ENCODE measurements at regions of chr17 and their contacts with region 1.

Region 1: GRCh38 chr17:48259694-48260291 is 152.2 kb downstream of the SNX11 start:
- DNase-seq: no peak
- ATAC-seq: no peak
- H3K4me3 ChIP-seq: no peak overlapping the region
- H3K27ac ChIP-seq: no peak overlapping the region
- H3K4me1 ChIP-seq: no peaks in the 10 kb centered on the region
- H3K27me3 ChIP-seq: no peaks in the 10 kb centered on the region
- CTCF ChIP-seq: peak; percentile 60

Region 2: GRCh38 chr17:48174833-48175523 is 84.8 kb before region 1 on chr17:
- intact Hi-C with region 1: no loop called
- DNase-seq: no peak
- ATAC-seq: no peak
- H3K4me3 ChIP-seq: no peak overlapping the region
- H3K27ac ChIP-seq: no peak overlapping the region
- H3K4me1 ChIP-seq: no peaks in the 10 kb centered on the region
- H3K27me3 ChIP-seq: peaks cover 0 to 4% (median 3%) of the 10 kb centered on the region in 3 donors
- CTCF ChIP-seq: no peak

Region 3: DNA sequence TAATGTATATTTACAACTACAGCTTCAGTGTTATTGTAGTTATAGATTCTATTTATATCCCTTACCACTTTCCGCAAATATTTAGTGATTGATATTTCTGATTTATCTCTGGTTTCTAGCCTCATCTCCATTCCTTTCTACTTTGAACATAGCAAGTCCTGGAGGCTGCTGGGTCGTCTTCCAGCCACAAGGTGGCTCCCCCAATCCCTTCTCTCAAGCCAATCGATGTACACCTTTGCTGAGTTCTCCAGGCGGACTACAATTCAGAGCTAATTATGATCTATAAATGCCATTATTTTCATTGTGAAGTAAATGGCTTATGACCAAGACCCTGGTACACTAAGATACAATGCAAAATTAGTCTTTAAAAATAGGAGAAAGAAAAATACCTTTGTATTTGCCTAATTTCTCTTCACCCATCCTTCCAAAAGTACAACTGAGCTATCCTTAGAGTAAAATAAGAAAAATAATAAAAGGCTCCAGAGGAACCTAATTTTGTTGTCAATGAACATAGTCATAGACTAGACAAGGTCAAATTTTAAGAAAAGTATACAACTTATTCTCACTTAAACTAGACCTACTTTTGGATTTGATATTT is 48.1 kb after region 1 on chr17:
- intact Hi-C with region 1: loop called in 1 of 2 experiments (anchors 10 kb)
- DNase-seq: peak in 1 of 2 donors; percentile 28
- ATAC-seq: peak; percentile 54 to 77 (median 58)
- H3K4me3 ChIP-seq: no peak overlapping the region
- H3K27ac ChIP-seq: no peak overlapping the region
- H3K4me1 ChIP-seq: no peaks in the 10 kb centered on the region
- H3K27me3 ChIP-seq: peaks cover 0 to 33% (median 16%) of the 10 kb centered on the region in 3 donors
- CTCF ChIP-seq: peak; percentile 78

Region 4: DNA sequence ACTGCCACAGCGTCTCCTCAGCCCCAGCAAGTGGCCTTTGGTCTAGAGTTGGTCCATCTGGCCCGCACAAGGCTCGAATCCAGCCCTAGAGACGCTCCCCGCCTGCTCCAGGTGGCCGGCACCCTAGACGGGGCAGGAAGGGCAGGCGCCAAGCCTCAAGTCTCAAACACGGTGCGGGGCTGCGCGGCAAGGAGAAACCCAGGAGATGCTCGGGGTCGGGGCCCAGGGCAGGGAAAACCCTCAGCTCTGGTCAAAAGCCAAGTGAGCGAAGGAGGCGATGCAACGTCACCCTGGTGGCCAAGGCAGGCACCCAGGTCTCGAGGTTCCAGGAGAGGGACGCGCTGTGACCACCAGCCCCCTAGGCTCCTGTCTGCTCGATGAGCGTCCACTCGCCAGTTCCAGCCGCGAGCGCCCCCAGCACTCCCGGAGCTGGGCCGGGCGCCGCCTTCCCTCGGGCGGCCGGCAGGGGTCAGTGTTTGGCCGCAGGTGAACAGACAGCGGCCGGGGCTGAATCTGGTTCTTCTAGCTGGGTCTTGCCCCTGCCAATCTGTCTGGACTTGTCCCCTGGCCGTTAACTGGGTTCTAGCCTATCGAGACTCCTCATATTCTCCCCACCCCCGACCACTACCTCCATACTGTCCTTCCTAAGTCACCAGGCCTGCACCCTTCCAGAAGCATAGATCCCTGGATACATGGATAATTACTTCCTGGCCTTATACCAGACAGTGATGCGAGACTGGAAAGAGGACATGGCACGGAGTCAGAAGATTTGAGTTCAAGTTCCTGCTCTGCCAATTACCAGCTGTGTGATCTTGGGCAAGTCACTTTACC is 418.6 kb after region 1 on chr17:
- intact Hi-C with region 1: no loop called
- DNase-seq: peak; percentile 58 to 76
- ATAC-seq: peak; percentile 79 to 93 (median 83)
- H3K4me3 ChIP-seq: no peak overlapping the region
- H3K27ac ChIP-seq: no peak overlapping the region
- H3K4me1 ChIP-seq: no peaks in the 10 kb centered on the region
- H3K27me3 ChIP-seq: peaks cover 0 to 44% (median 5%) of the 10 kb centered on the region in 3 donors
- CTCF ChIP-seq: peak; percentile 88